Activated naive CD4-positive, alpha-beta T cell treated with anti-CD3 and anti-CD28 coated beads for 36 hours (primary cell): ENCODE measurements at regions of chr17 and their contacts with region 1.

Region 1: GRCh38 chr17:32142038-32142856 is at the start of gene RHOT1:
- DNase-seq: peak; percentile 67
- H3K4me3 Mint-ChIP-seq: peak within 1 kb of the TSS; percentile 91
- H3K27ac Mint-ChIP-seq: peak within 1 kb of the TSS; percentile 70
- H3K4me1 Mint-ChIP-seq: peaks cover 25% of the 10 kb centered on the region
- H3K27me3 Mint-ChIP-seq: no peaks in the 10 kb centered on the region
- total RNA-seq, gene RHOT1: 23.0 to 23.7 TPM

Region 2: DNA sequence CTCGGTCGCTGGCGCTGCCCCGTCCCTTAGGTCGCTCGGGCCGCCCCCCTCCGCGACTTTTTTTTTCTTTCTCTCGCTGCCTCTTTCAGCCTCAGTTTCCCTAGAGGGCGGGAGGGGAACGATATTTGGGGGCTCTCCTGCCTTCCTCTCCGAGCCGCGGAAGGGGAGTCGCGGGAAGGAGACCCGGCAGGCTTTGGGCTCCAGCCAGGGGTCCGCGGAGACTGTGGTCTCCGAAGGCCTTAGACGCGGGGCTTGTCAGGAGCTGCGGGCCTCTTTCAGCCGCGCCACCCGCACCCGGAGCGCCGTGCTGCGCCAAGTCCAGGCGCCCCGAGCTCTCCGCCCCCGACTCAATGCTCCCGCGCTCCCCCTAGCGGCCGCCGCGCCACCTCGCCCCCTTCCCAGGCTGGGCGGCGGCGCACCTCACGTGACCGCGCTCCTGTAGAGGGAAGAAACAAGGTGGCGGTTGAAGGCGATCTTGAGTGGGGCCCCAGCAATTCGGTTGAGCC is 135.2 kb before region 1 on chr17 and contains the start of gene LRRC37B:
- CTCF ChIA-PET with region 1: interaction called, 71 read pairs
- intact Hi-C with region 1: loop called (anchors 1 kb)
- DNase-seq: peak; percentile 91
- H3K4me3 Mint-ChIP-seq: peak within 1 kb of the TSS; percentile 83
- H3K27ac Mint-ChIP-seq: peak within 1 kb of the TSS; percentile 79
- H3K4me1 Mint-ChIP-seq: peaks cover 31% of the 10 kb centered on the region
- H3K27me3 Mint-ChIP-seq: no peaks in the 10 kb centered on the region
- total RNA-seq, gene LRRC37B: 14.4 to 15.0 TPM

Region 3: DNA sequence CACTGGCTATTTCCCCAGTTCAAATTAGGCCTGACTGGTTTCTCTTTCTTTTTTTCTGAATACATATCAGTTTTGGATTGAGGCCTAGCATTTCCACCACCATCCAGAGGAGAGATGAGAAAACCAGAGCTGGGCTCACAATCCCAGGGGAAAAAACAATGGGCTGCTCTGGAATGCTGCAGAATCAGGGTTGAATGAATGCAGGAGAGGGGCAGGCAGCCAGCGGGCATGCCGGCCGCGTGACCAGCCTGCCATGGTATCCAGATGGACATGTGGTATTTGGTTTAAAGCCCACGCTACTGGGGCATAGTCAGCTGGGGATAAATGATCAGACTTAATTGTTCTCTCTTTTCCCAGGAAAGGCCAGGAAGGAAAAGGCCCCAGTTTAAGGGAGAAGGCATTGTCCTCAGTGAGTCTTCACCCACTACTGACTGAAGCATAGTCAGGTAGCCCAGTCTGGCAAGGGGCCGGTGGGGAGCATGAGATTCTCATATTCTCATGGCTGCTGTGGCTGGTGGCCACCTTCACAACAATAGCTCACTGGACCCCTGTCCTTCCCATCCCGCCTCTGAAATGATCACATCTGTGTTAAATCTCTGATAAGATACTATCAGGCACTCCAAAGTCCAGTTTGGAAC is 38.7 kb before region 1 on chr17:
- CTCF ChIA-PET with region 1: interaction called, 13 read pairs
- intact Hi-C with region 1: no loop called
- DNase-seq: no peak
- H3K4me3 Mint-ChIP-seq: no peak overlapping the region
- H3K27ac Mint-ChIP-seq: peak overlapping the region; percentile 70
- H3K4me1 Mint-ChIP-seq: peaks cover 41% of the 10 kb centered on the region
- H3K27me3 Mint-ChIP-seq: no peaks in the 10 kb centered on the region

Region 4: GRCh38 chr17:32111141-32111771 is 31.0 kb before region 1 on chr17:
- CTCF ChIA-PET with region 1: interaction called, 13 read pairs
- intact Hi-C with region 1: no loop called
- DNase-seq: peak; percentile 71
- H3K4me3 Mint-ChIP-seq: no peak overlapping the region
- H3K27ac Mint-ChIP-seq: no peak overlapping the region
- H3K4me1 Mint-ChIP-seq: peaks cover 18% of the 10 kb centered on the region
- H3K27me3 Mint-ChIP-seq: no peaks in the 10 kb centered on the region

Region 5: DNA sequence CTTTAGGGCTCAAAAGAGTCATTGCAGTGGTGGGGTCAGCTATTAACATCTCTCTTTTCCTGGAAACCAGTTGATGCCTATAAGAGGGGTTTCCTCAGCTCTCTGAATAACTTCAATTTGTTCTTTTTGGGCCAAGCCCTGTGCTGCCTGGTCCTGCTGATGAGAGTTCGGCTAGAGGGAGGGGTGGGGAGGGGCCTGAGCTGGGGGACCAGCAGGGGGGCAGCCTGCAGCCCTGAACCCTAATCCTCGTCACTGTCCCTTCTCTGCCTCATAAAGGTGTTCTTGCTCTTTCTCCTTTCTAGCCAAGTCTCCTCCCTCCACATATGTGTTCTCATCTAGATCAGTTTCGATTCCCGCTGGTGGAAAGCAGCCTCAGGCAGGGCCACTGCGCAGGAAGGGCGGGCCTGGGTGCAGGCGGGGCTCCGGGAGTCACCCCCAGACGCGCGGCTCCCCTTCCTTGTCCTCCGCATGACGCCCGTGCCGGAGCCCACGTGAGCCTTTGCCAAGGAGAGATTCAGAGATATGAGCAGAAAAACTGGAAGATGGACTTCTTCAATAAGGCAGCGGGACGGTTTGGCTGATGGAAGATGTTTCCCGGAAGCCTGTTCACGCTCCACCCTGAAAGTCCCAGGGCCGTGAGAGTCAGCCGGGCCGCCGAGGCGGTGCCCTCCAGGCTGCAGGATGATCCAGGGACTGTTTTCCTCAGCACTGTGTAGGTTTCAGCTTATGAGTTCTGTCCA is 14.9 kb before region 1 on chr17:
- CTCF ChIA-PET with region 1: interaction called, 72 read pairs
- intact Hi-C with region 1: loop called (anchors 1 kb)
- DNase-seq: peak; percentile 88
- H3K4me3 Mint-ChIP-seq: peak overlapping the region; percentile 83
- H3K27ac Mint-ChIP-seq: peak overlapping the region; percentile 91
- H3K4me1 Mint-ChIP-seq: peaks cover 17% of the 10 kb centered on the region
- H3K27me3 Mint-ChIP-seq: no peaks in the 10 kb centered on the region

Region 6: DNA sequence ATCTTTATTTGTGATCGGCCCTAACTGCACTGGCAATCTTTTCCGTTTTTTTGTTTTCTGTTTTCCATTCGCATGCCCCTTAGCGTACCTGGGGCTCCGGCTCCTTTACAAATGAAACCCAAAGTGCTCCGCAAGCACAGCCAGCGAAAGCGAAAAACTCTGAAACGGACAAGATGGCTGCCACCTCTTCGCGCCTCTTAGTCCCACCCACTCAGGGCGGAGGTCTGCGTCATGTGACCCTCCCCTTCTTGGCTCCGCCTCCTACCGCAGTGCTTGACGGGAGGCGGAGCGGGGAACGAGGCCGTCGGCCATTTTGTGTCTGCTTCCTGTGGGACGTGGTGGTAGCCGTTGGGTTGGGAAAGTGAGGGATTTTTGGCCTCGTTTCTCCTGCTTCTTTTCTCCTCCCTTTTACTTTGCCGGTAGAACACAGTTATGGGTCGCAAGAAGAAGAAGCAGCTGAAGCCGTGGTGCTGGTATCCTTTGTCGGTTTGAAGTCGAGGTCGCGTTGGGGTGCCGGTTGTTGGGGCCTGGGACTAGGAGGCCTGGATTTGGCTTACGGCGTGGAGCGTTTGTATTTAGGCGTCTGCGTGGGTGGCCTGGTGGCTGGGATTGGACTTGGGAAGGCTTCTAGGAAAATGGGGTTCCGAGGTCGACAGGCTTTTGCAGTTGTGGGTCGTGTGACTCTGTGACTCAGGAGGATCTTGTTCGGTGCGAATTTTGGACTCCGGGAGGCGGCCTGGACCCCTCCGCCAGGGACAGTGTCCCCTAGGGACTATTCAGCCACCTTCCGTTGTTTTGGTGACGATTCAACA is 207.8 kb after region 1 on chr17 and contains the start of gene ZNF207:
- CTCF ChIA-PET with region 1: no interaction called
- intact Hi-C with region 1: loop called (anchors 10 kb)
- DNase-seq: peak; percentile 98
- H3K4me3 Mint-ChIP-seq: peak within 1 kb of the TSS; percentile 97
- H3K27ac Mint-ChIP-seq: peak within 1 kb of the TSS; percentile 99
- H3K4me1 Mint-ChIP-seq: peaks cover 40% of the 10 kb centered on the region
- H3K27me3 Mint-ChIP-seq: no peaks in the 10 kb centered on the region
- total RNA-seq, gene ZNF207: 213 to 230 TPM

Region 7: GRCh38 chr17:32783602-32784001 is 641.4 kb after region 1 on chr17:
- CTCF ChIA-PET with region 1: no interaction called
- intact Hi-C with region 1: no loop called
- DNase-seq: no peak
- H3K4me3 Mint-ChIP-seq: no peak overlapping the region
- H3K27ac Mint-ChIP-seq: no peak overlapping the region
- H3K4me1 Mint-ChIP-seq: no peaks in the 10 kb centered on the region
- H3K27me3 Mint-ChIP-seq: no peaks in the 10 kb centered on the region